HAP-1 (cell line): ENCODE measurements at regions of chr17 and their contacts with region 1.

Region 1: GRCh38 chr17:28509789-28510188 is 3.6 kb downstream of the FOXN1 start:
- DNase-seq: no peak
- H3K4me3 ChIP-seq: no peak overlapping the region
- H3K4me1 ChIP-seq: no peaks in the 10 kb centered on the region
- H3K27me3 ChIP-seq: peaks cover 34% of the 10 kb centered on the region

Region 2: GRCh38 chr17:28571255-28572122 is 61.7 kb after region 1 on chr17 and contains the start of gene PIGS:
- in situ Hi-C with region 1: loop called (anchors 10 kb)
- DNase-seq: peak; percentile 91 to 98
- H3K4me3 ChIP-seq: peak within 1 kb of the TSS; percentile 96
- H3K4me1 ChIP-seq: peaks cover 10% of the 10 kb centered on the region
- H3K27me3 ChIP-seq: no peaks in the 10 kb centered on the region

Region 3: DNA sequence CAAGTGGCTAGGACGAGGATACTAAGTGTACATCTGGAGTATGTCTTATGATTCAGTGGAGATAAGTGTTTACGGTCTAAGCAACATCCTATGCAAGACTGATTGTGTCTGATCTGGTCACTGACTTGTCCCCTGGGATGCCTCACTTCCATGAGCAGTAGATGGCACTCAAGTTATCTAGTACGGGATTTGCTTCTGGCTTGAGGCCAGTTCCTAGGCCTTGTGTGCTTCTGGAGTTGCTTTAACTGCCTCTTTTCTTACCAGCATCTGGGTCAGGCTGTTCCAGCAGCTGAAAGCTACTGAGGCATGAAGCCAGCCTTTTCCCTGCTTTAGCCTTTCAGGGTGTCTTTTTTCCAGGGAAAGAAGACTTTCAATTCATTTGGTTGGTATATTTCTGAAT is 175.2 kb after region 1 on chr17:
- in situ Hi-C with region 1: no loop called
- DNase-seq: no peak
- H3K4me3 ChIP-seq: no peak overlapping the region
- H3K4me1 ChIP-seq: no peaks in the 10 kb centered on the region
- H3K27me3 ChIP-seq: no peaks in the 10 kb centered on the region